CD8-positive, alpha-beta T cell (primary cell): ENCODE measurements at regions of chr15 and their contacts with region 1.

Region 1: DNA sequence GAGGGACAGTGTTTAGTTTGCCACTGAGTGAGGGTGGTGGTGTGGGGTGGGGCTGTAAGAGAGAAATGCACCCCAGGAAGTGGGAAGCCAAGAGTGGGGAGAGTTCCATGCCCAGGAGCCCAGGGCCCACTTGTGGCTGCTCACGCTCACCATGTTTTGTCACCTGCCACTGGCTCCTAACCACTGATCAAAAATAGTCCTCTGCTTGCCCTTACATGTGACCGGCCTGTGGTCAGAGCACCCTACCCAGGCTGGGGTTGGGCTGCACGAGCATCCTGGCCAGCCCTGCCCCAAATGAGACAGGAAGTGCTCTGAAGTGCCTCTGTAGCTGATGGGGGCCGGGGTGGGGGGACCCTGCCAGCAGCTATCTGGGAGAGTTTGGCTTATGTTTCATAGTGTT is 216.3 kb downstream of the RPLP1 start:
- DNase-seq: peak in 8 of 9 experiments; percentile 22 to 80 (median 56)
- ATAC-seq: peak; percentile 65
- H3K4me3 ChIP-seq: peak overlapping the region in 1 of 2 experiments; percentile 10
- H3K4me3 Mint-ChIP-seq: no peak overlapping the region
- H3K27ac ChIP-seq: peak overlapping the region in 1 of 2 experiments; percentile 43
- H3K27ac Mint-ChIP-seq: peak overlapping the region; percentile 39
- H3K4me1 ChIP-seq: peaks cover 48% of the 10 kb centered on the region
- H3K4me1 Mint-ChIP-seq: peaks cover 51% of the 10 kb centered on the region
- H3K27me3 ChIP-seq: no peaks in the 10 kb centered on the region
- H3K27me3 Mint-ChIP-seq: no peaks in the 10 kb centered on the region
- CTCF ChIP-seq: no peak

Region 2: DNA sequence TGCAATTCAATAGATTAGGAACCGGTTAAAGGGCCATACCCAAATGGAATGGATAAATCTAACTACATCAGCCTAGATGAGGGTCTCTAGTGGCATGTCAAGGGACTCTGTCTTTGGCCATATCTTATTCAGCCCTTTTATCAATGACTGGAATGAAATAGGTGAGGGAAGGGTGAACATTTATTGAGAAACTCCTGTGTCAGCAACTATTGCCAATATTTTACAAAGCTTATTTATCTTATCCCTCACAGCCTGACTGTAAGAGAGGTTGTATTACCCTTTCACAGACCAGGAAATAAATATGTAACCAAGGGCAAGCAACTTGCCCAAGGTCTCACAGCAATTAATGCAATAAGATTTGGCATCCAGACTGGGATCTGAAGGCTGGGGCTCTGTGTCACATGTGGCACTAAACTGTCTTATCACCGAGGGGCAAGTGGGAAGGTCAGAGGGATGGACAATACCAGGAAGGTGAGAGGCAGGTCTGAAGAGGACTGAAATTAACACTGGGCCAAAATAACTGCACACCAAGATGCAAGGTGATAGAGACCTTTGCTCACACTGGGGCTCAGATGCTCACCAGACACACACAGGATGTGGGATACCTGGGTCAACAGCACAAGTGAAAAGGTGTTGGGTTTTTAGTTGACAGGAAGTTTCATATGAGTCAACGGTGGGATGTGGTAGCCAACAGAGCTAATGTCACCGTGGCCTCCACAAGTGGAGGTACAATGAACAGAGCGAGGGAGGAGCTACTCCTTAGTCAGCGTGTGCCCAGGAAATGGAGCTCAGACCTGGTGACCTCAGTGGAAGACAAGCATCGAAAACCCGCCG is 45.0 kb after region 1 on chr15:
- CTCF ChIA-PET with region 1: no interaction called
- POLR2A ChIA-PET with region 1: no interaction called
- intact Hi-C with region 1: loop called in 1 of 2 experiments (anchors 1 kb)
- DNase-seq: peak; percentile 34 to 95 (median 77)
- ATAC-seq: peak; percentile 89
- H3K4me3 ChIP-seq: no peak overlapping the region
- H3K4me3 Mint-ChIP-seq: peak overlapping the region; percentile 20
- H3K27ac ChIP-seq: peak overlapping the region in 1 of 2 experiments; percentile 68
- H3K27ac Mint-ChIP-seq: peak overlapping the region; percentile 89
- H3K4me1 ChIP-seq: peaks cover 47% of the 10 kb centered on the region
- H3K4me1 Mint-ChIP-seq: peaks cover 66% of the 10 kb centered on the region
- H3K27me3 ChIP-seq: no peaks in the 10 kb centered on the region
- H3K27me3 Mint-ChIP-seq: no peaks in the 10 kb centered on the region
- CTCF ChIP-seq: no peak